Esophagus muscularis mucosa (tissue), 4 donors: ENCODE measurements at regions of chr9 and their contacts with region 1.

Region 1: GRCh38 chr9:114487607-114488300 is 17.5 kb downstream of the WHRN start:
- DNase-seq: no peak
- H3K4me3 ChIP-seq: no peak overlapping the region
- H3K27ac ChIP-seq: no peak overlapping the region
- H3K4me1 ChIP-seq: peaks cover 0 to 16% (median 5%) of the 10 kb centered on the region in 4 donors
- H3K27me3 ChIP-seq: no peaks in the 10 kb centered on the region
- CTCF ChIP-seq: peak; percentile 85 to 90 (median 89)
- EP300 ChIP-seq: no peak
- POLR2A ChIP-seq: no peak

Region 2: DNA sequence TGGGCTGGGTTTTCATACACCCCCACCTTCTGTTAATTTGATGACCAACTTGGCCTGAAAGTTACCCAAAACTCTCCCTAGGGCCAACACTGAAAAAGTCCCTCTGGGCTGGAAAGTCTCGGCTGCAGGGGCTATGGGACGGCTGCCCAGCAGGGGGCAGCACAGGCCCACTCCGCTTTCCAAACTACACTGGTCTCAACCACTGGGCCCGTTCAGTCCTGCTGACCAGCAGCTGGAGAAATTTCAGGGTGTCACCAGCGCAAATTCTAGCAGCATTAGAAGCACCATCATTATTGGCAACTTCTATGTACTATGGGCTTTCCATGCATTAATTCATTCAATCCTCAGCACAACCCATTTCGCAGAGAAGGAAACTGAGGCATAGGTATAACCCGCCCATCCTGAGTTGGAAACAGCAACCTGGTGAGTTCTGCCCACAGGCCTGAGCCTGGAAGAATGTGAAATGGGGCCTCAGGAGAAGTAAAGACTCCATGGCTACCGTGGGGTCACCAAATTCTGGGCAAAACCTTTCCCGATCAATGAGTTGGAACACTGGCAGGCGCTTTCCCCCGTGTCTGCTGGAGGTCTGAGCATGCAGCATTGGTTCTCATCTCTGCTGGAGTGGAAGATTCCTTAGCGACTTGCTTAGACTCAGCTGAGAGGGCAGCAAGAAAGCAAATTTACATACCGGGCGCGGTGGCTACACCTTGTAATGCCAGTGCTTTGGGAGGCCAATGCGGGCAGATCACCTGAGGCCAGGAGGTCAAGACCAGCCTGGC is 148.4 kb before region 1 on chr9:
- intact Hi-C with region 1: loop called (anchors 10 kb)
- DNase-seq: no peak
- H3K4me3 ChIP-seq: no peak overlapping the region
- H3K27ac ChIP-seq: no peak overlapping the region
- H3K4me1 ChIP-seq: no peaks in the 10 kb centered on the region
- H3K27me3 ChIP-seq: no peaks in the 10 kb centered on the region
- CTCF ChIP-seq: peak; percentile 61 to 83 (median 65)
- EP300 ChIP-seq: no peak
- POLR2A ChIP-seq: no peak

Region 3: GRCh38 chr9:114413861-114414301 is 73.9 kb before region 1 on chr9:
- intact Hi-C with region 1: loop called (anchors 5 kb)
- DNase-seq: no peak
- H3K4me3 ChIP-seq: no peak overlapping the region
- H3K27ac ChIP-seq: peak overlapping the region in 3 of 4 donors; percentile 35 to 40 (median 37)
- H3K4me1 ChIP-seq: peaks cover 0 to 18% (median 13%) of the 10 kb centered on the region in 4 donors
- H3K27me3 ChIP-seq: no peaks in the 10 kb centered on the region
- CTCF ChIP-seq: no peak
- EP300 ChIP-seq: no peak
- POLR2A ChIP-seq: no peak

Region 4: GRCh38 chr9:114559830-114560513 is 72.2 kb after region 1 on chr9:
- intact Hi-C with region 1: no loop called
- DNase-seq: no peak
- H3K4me3 ChIP-seq: no peak overlapping the region
- H3K27ac ChIP-seq: no peak overlapping the region
- H3K4me1 ChIP-seq: no peaks in the 10 kb centered on the region
- H3K27me3 ChIP-seq: peaks cover 0 to 5% (median 0%) of the 10 kb centered on the region in 4 donors
- CTCF ChIP-seq: no peak
- EP300 ChIP-seq: no peak
- POLR2A ChIP-seq: no peak

Region 5: DNA sequence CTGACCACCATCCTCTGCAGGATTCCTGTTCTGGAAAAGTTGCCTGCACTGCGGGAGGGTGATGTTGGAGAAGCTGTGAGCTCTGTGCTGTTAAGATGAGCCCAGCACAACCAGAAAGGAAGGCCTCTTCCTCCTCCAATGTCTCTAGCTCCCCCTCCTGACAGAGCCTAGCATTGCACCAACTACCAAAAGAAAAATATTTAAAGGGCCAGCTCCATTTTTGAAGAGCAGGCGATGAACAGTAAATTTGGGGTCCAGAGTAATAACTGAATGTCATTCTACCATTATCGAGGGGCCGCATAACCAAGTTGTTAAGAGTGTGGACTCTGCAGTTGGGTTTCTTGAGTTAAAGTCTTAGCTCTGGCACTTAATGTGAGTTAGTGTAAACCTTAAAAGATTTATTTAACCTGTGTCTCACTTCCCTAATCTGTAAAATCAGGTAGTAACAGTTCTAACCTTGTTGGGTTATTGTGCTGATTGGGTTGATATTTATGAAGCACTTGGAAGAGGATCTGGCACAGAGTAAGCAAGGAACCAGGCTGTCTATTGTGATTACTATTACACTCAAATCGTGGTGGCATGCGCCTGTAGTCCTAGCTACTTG is 165.9 kb after region 1 on chr9:
- intact Hi-C with region 1: loop called (anchors 2 kb)
- DNase-seq: peak; percentile 93
- H3K4me3 ChIP-seq: no peak overlapping the region
- H3K27ac ChIP-seq: peak overlapping the region in 3 of 4 donors; percentile 30 to 46 (median 36)
- H3K4me1 ChIP-seq: peaks cover 0 to 12% (median 10%) of the 10 kb centered on the region in 4 donors
- H3K27me3 ChIP-seq: no peaks in the 10 kb centered on the region
- CTCF ChIP-seq: peak; percentile 87 to 90 (median 89)
- EP300 ChIP-seq: no peak
- POLR2A ChIP-seq: no peak